Tibial artery (tissue), 4 donors: ENCODE measurements at regions of chr3 and their contacts with region 1.

Region 1: DNA sequence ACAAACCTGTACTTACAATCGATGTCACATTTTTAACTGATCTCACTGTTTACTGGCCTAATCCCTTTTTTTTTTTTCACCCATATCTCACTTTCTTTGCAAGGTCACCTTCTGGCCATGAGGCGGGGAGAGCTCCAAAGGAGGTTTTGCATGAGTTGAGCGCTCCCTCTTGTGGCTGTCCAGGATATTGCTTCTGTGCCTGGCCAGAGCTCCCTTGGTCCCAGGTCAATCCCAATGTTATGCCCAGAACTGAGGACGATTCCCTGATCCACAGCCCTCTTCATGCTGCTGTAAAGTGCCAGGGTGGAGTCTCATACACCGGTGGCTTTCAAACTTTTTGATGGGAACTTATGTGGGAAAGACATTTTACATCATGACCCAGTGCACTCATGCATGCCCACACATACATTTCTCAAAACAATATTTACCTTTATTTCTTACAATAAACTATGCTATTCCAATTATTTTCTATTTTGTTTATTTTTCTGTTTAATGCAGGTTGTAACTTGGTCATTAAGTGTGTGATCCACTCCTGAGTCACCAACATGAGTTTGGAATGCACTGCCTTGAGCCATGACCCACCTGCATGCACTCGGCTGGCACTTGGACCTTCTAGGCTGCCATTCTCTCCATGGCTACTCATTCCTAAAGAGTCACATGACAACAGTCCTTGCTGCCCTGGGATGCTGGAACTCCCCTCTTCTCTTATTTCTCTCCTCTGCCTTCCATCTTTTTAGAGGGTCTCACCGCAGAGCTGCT is 9.6 kb upstream of the SST start:
- DNase-seq: peak; percentile 75 to 82
- H3K4me3 ChIP-seq: no peak overlapping the region
- H3K27ac ChIP-seq: no peak overlapping the region
- H3K4me1 ChIP-seq: peaks cover 0 to 3% (median 0%) of the 10 kb centered on the region in 4 donors
- H3K27me3 ChIP-seq: peaks cover 0 to 12% of the 10 kb centered on the region in 2 donors
- CTCF ChIP-seq: peak; percentile 92 to 93

Region 2: DNA sequence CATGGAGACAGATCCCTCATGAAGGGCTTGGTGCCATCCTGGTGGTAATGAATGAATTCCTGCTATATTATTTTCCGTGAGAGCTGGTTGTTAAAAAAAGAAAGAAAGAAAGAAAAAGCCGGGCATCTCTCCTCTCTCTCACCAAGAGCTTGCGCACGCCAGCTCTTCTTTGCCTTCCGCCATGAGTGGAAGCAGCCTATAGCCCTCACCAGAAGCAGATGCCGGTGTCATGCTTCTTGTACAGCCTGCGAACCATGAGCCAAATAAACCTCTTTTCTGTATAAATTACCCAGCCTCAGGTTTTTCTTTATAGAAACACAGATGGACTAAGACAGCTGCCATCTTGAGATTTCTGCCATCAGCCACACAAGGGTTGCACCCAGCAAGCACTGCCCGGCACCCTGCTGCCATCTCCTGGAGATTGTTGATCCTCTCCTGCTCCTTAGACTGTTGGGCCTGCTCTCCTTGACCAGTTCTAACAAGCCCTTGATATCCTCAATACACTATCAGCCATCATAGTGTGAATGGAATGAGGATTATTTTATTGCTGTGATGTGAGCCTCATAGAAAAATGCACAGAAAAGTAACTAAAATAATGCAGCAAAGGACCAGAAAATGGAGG is 1070.5 kb before region 1 on chr3:
- intact Hi-C with region 1: loop called (anchors 10 kb)
- DNase-seq: no peak
- H3K4me3 ChIP-seq: no peak overlapping the region
- H3K27ac ChIP-seq: no peak overlapping the region
- H3K4me1 ChIP-seq: no peaks in the 10 kb centered on the region
- H3K27me3 ChIP-seq: peaks cover 0 to 14% of the 10 kb centered on the region in 2 donors
- CTCF ChIP-seq: no peak

Region 3: DNA sequence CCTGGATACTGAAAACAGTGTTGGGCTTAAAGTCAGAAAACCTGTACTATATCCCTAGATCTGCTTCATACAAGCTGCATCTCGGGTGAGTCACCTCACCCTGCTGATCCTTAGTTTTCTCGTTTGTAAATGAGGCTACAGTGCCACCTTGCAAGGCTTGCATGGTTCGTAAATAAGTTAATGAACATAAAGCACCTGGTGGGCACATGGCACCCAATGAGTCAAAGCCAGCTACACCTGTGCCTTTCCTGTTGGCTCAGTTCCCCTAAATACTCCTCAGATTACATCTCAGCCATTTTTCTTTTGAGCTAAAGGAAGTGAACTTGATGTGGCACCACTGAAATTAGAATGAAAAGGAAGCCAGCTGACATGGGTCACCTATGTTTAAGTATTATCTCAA is 456.0 kb before region 1 on chr3:
- intact Hi-C with region 1: loop called (anchors 5 kb)
- DNase-seq: no peak
- H3K4me3 ChIP-seq: no peak overlapping the region
- H3K27ac ChIP-seq: no peak overlapping the region
- H3K4me1 ChIP-seq: peaks cover 0 to 22% (median 6%) of the 10 kb centered on the region in 4 donors
- H3K27me3 ChIP-seq: no peaks in the 10 kb centered on the region
- CTCF ChIP-seq: no peak

Region 4: DNA sequence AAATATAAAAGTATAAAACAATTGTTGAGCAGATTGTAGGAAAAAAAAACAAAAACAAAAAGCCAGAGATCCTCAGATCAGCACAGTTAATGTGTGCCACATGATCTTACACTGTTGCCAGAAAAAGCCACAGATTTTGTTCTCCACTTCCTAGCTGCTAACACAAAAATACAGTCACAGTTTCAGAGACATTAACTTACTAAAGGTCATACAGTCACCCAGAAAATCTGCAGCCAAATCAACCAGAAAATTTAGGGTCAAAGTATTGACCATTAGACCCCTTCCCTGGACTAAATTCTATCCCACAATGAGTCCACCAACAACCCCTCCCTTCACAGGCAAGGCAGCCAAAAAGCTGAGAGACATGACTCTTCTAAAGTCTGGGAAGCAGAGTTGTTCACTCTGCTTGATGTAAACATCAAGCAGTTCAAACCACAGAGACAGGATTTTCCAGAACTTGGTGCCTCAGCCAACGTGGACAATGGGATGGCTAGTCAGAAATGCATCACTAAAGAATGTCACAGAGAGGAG is 68.8 kb before region 1 on chr3:
- intact Hi-C with region 1: no loop called
- DNase-seq: no peak
- H3K4me3 ChIP-seq: no peak overlapping the region
- H3K27ac ChIP-seq: no peak overlapping the region
- H3K4me1 ChIP-seq: peaks cover 0 to 3% (median 0%) of the 10 kb centered on the region in 4 donors
- H3K27me3 ChIP-seq: peaks cover 0 to 4% of the 10 kb centered on the region in 2 donors
- CTCF ChIP-seq: no peak

Region 5: GRCh38 chr3:187714404-187714979 is 34.7 kb after region 1 on chr3:
- intact Hi-C with region 1: no loop called
- DNase-seq: peak; percentile 71 to 80
- H3K4me3 ChIP-seq: no peak overlapping the region
- H3K27ac ChIP-seq: no peak overlapping the region
- H3K4me1 ChIP-seq: peaks cover 0 to 5% (median 0%) of the 10 kb centered on the region in 4 donors
- H3K27me3 ChIP-seq: no peaks in the 10 kb centered on the region
- CTCF ChIP-seq: peak; percentile 86 to 94